Activated T-helper 1 cell treated with anti-CD3 and anti-CD28 coated beads, Interleukin-12 subunit alpha, Interleukin-12 subunit beta, Interleukin-2, Interleukin-4 antibody, amounts not matched to agents 30 ng/mL and 10 ng/mL and 1 ng/mL, durations not matched to agents 14 hours and 24 hours and 36 hours (primary cell): ENCODE measurements at regions of chr6 and their contacts with region 1.

Region 1: GRCh38 chr6:134379086-134379485 is 61.2 kb upstream of the SGK1 start:
- DNase-seq: peak; percentile 49
- H3K4me3 Mint-ChIP-seq: peak overlapping the region; percentile 38
- H3K27ac Mint-ChIP-seq: peak overlapping the region; percentile 82
- H3K4me1 Mint-ChIP-seq: peaks cover 47% of the 10 kb centered on the region
- H3K27me3 Mint-ChIP-seq: no peaks in the 10 kb centered on the region

Region 2: GRCh38 chr6:134317471-134318131 is 61.5 kb before region 1 on chr6 and contains the start of gene SGK1:
- intact Hi-C with region 1: loop called (anchors 2 kb)
- DNase-seq: peak; percentile 3
- H3K4me3 Mint-ChIP-seq: peak within 1 kb of the TSS; percentile 91
- H3K27ac Mint-ChIP-seq: peak within 1 kb of the TSS; percentile 57
- H3K4me1 Mint-ChIP-seq: peaks cover 39% of the 10 kb centered on the region
- H3K27me3 Mint-ChIP-seq: peaks cover 16% of the 10 kb centered on the region
- total RNA-seq, gene SGK1: 48.7 and 50.2 TPM in 2 replicates

Region 3: GRCh38 chr6:134398453-134398852 is 19.4 kb after region 1 on chr6:
- intact Hi-C with region 1: loop called (anchors 2 kb)
- DNase-seq: no peak
- H3K4me3 Mint-ChIP-seq: no peak overlapping the region
- H3K27ac Mint-ChIP-seq: peak overlapping the region; percentile 21
- H3K4me1 Mint-ChIP-seq: peaks cover 26% of the 10 kb centered on the region
- H3K27me3 Mint-ChIP-seq: peaks cover 2% of the 10 kb centered on the region